ENCODE measurements at regions of chr7 and their contacts with region 1.

Region 1: GRCh38 chr7:74026903-74027551 is 946 bp upstream of the ELN start:
- DNase-seq: peak; percentile 72
- ATAC-seq: peak; percentile 79
- H3K4me3 Mint-ChIP-seq: no peak overlapping the region
- H3K27ac Mint-ChIP-seq: no peak overlapping the region
- H3K4me1 Mint-ChIP-seq: peaks cover 3% of the 10 kb centered on the region
- H3K27me3 Mint-ChIP-seq: peaks cover 60% of the 10 kb centered on the region

Region 2: GRCh38 chr7:74013519-74014267 is 13.3 kb before region 1 on chr7:
- CTCF ChIA-PET with region 1: interaction called, 17 read pairs
- DNase-seq: no peak
- ATAC-seq: no peak
- H3K4me3 Mint-ChIP-seq: no peak overlapping the region
- H3K27ac Mint-ChIP-seq: no peak overlapping the region
- H3K4me1 Mint-ChIP-seq: peaks cover 5% of the 10 kb centered on the region
- H3K27me3 Mint-ChIP-seq: no peaks in the 10 kb centered on the region

Region 3: DNA sequence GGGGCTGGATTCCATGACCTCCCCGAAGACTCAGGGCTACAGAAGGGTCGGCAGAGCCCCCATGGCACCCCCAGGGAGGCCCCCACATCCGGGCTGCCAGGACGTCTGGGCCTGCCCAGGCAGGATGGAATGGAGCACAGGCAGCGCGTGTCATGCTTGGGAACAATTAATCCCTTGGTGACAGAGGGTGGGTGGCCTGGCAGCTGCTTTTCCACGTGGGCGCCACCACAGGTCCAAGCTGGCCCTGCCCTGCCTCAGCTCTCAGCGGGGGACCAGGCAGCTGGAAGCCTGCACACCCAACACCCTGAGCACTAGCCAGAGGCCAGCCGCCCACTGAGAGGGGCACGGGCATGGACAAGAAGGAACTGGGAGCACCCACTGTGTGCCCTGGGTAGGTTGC is 12.3 kb after region 1 on chr7:
- CTCF ChIA-PET with region 1: interaction called, 30 read pairs
- DNase-seq: no peak
- ATAC-seq: no peak
- H3K4me3 Mint-ChIP-seq: no peak overlapping the region
- H3K27ac Mint-ChIP-seq: no peak overlapping the region
- H3K4me1 Mint-ChIP-seq: no peaks in the 10 kb centered on the region
- H3K27me3 Mint-ChIP-seq: no peaks in the 10 kb centered on the region

Measured in activated CD8-positive, alpha-beta memory T cell treated with anti-CD3 and anti-CD28 coated beads, Interleukin-2, amount 10 ng/mL, durations not matched to agents 7 days and 5 days (primary cell).